Uterus (tissue), 4 donors: ENCODE measurements at regions of chr3 and their contacts with region 1.

Region 1: GRCh38 chr3:45037734-45038455 is 11.8 kb downstream of the CLEC3B start:
- DNase-seq: peak; percentile 91 to 93
- H3K4me3 ChIP-seq: no peak overlapping the region
- H3K27ac ChIP-seq: no peak overlapping the region
- H3K4me1 ChIP-seq: no peaks in the 10 kb centered on the region
- H3K27me3 ChIP-seq: no peaks in the 10 kb centered on the region
- CTCF ChIP-seq: peak; percentile 87 to 97 (median 92)
- POLR2A ChIP-seq: no peak

Region 2: DNA sequence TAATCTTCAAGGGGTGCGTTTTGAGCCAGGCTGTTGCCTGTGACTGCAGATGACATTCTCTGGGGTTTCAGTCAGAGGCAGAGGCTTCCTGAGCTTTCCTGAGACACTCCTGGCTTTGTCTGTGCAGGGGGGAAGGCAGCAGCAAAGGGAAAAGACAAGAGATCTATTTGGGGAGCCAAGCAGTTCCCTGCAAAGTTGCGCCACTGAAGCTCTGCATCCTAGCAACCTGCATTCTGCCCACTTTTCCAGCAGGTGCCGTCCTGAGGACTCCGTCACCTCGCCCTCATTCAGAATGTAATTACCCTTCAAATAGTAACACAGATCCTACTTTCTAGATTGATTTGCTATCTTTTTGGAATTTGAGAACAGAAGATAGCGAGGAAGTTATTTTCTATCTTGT is 190.1 kb after region 1 on chr3:
- intact Hi-C with region 1: no loop called
- DNase-seq: no peak
- H3K4me3 ChIP-seq: no peak overlapping the region
- H3K27ac ChIP-seq: peak overlapping the region in 1 of 2 donors; percentile 96
- H3K4me1 ChIP-seq: peaks cover 0 to 8% of the 10 kb centered on the region in 2 donors
- H3K27me3 ChIP-seq: no peaks in the 10 kb centered on the region
- CTCF ChIP-seq: no peak
- POLR2A ChIP-seq: no peak

Region 3: GRCh38 chr3:45499529-45499928 is 461.6 kb after region 1 on chr3:
- intact Hi-C with region 1: loop called (anchors 5 kb)
- DNase-seq: no peak
- H3K4me3 ChIP-seq: no peak overlapping the region
- H3K27ac ChIP-seq: no peak overlapping the region
- H3K4me1 ChIP-seq: peaks cover 0 to 4% of the 10 kb centered on the region in 2 donors
- H3K27me3 ChIP-seq: no peaks in the 10 kb centered on the region
- CTCF ChIP-seq: peak; percentile 53 to 66 (median 63)
- POLR2A ChIP-seq: no peak